ENCODE measurements at regions of chr19 and their contacts with region 1.

Region 1: GRCh38 chr19:19643158-19644053 is at the start of gene GMIP:
- DNase-seq: peak; percentile 47 to 90 (median 78)

Region 2: DNA sequence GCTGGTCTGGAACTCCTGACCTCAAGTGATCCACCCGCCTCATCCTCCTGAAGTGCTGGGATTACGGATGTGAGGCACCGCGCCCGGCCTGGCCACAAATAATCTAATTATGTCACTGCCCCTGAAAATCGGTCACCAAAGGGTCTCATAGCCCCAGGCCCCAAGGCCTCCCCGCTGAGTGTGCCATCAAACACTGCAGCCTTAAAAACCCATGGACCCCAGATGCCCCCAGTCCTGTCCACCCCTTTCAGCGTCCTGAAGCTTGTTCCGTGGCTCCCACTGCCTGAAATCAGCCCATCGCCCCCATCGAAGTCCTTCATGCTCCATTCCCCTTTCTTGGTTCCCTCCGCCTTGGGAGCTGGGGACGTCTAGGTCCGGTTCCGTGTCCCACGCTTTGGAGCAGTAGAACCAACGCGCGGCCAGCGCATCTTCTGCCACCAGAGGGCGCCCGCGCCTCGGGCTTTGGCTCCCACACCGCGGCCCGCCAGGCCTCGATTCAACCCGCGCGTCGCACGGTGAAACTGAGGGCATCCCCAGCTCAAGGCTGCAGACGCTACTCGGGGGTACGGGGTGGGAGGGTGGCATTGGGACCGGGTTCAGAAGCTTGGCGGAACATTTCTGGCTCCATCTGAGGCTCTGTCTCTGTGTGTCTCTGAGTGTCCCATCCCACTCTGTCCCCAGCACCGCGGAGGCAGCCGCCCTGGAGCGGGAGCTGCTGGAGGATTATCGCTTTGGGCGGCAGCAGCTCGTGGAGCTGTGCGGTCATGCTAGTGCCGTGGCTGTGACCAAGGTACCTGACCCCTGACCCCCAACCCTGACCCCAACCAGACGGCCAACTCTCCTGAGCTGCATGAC is 111.2 kb before region 1 on chr19:
- intact Hi-C with region 1: loop called (anchors 5 kb)
- DNase-seq: peak; percentile 77 to 97 (median 90)

Region 3: DNA sequence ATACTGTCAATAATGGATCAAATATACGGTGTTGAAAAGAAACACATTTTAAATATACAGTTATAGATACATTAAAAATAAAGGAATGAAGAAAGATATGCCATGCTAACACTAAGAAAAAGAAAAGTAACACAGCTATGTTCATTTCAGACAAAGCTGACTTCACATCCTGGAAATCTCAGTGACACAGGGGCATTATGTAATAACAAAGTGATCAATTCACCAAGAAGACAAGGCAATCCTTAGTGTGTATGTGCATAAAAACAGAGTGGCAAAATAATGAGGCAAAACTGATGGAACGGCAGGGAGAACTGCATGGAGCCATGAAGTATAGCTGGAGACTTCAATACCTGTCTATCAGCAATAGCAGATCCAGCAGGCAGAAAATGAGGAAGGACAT is 76.4 kb after region 1 on chr19:
- intact Hi-C with region 1: no loop called
- DNase-seq: no peak

Measured in head of caudate nucleus (tissue), 42 donors.